Body of pancreas (tissue), 4 donors: ENCODE measurements at regions of chr12 and their contacts with region 1.

Region 1: GRCh38 chr12:95815635-95816212 is 25.2 kb upstream of the NTN4 start:
- DNase-seq: no peak
- ATAC-seq: peak; percentile 70
- H3K4me3 ChIP-seq: no peak overlapping the region
- H3K27ac ChIP-seq: no peak overlapping the region
- H3K4me1 ChIP-seq: peaks cover 6% of the 10 kb centered on the region
- H3K27me3 ChIP-seq: no peaks in the 10 kb centered on the region
- CTCF ChIP-seq: peak; percentile 34 to 92 (median 89)
- POLR2A ChIP-seq: no peak

Region 2: GRCh38 chr12:94586589-94587259 is 1229.0 kb before region 1 on chr12:
- intact Hi-C with region 1: no loop called
- DNase-seq: peak in 1 of 4 donors; percentile 19
- ATAC-seq: no peak
- H3K4me3 ChIP-seq: no peak overlapping the region
- H3K27ac ChIP-seq: no peak overlapping the region
- H3K4me1 ChIP-seq: no peaks in the 10 kb centered on the region
- H3K27me3 ChIP-seq: no peaks in the 10 kb centered on the region
- CTCF ChIP-seq: no peak
- POLR2A ChIP-seq: no peak

Region 3: DNA sequence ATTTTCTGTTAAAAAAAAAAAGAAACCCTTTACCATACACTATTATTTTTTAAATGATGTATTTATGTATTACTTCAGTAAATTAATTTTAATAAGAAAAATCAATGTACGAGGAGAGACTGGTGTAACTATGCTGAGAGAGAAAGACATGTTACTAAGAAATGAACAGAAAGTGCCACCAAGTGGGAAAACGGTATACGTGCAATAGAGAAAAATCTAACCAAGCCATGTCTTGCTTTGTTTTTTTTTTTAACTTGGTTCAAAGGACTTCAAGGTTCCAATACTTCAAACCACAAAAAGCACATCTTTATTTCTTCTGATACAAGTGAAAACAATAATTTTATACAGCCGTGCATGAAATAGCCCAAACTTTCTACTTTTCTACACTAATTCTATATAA is 835.1 kb before region 1 on chr12:
- intact Hi-C with region 1: no loop called
- DNase-seq: no peak
- ATAC-seq: no peak
- H3K4me3 ChIP-seq: no peak overlapping the region
- H3K27ac ChIP-seq: no peak overlapping the region
- H3K4me1 ChIP-seq: no peaks in the 10 kb centered on the region
- H3K27me3 ChIP-seq: no peaks in the 10 kb centered on the region
- CTCF ChIP-seq: no peak
- POLR2A ChIP-seq: no peak

Region 4: DNA sequence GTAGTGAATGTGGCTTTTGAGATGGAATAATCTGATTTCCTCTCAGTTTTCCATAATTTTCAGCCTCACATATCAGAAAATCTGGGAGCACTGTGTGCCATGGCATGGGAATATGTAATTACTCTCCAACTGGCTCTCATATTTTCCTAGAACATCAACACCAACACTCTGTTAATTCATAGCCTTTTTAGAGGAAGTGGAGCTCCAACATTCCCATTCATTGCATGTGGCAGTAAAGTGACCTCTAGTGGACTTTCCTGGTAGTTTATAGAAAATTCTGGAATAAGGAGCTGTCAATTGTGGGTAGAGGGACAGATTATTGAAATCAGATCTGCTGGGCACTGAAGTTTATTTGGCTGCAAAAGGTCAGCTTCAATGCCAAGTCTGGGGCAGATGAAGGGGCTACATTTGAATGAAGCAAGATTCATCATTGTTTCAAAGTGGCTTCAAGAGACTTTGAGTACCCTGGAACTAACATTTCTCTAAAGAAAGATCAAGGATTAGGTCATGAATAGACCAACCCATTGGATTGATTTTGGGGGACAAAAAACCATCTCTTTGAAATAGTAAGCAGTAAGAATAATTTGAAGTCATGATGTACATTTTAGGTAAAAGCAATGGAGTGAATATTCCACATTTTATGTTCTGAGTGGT is 240.8 kb before region 1 on chr12:
- intact Hi-C with region 1: loop called (anchors 5 kb)
- DNase-seq: no peak
- ATAC-seq: peak; percentile 60
- H3K4me3 ChIP-seq: no peak overlapping the region
- H3K27ac ChIP-seq: no peak overlapping the region
- H3K4me1 ChIP-seq: no peaks in the 10 kb centered on the region
- H3K27me3 ChIP-seq: no peaks in the 10 kb centered on the region
- CTCF ChIP-seq: peak; percentile 58 to 74 (median 60)
- POLR2A ChIP-seq: no peak